Panc1 (cell line): ENCODE measurements at regions of chr5 and their contacts with region 1.

Region 1: GRCh38 chr5:131165119-131165727 is at the start of gene HINT1:
- DNase-seq: peak; percentile 69
- ATAC-seq: peak; percentile 96
- H3K4me3 ChIP-seq: peak within 1 kb of the TSS; percentile 83 to 92
- H3K27ac ChIP-seq: peak within 1 kb of the TSS; percentile 97
- H3K4me1 ChIP-seq: peaks cover 22% of the 10 kb centered on the region
- H3K27me3 ChIP-seq: no peaks in the 10 kb centered on the region
- CTCF ChIP-seq: peak; percentile 53
- total RNA-seq, gene HINT1: 233 TPM

Region 2: DNA sequence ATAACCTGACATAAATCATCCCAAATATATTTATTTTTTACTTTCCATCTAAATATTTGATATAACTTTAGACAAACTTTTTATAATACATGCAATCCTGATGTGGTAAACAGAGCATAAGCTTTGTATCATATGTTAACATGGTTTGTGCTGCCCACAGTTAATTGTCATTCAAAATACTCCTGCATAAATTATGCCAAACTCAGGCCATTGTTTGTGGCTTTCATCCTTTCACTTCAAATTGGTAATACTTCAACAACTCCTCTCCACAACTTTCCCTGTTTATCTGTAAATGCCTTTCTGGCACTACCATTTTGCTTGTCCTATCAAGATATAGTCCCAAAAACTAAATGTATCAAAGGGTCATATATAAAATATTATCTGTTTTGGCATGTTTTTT is 586.9 kb before region 1 on chr5:
- CTCF ChIA-PET with region 1: no interaction called
- POLR2A ChIA-PET with region 1: interaction called, 10 read pairs
- in situ Hi-C with region 1: no loop called
- intact Hi-C with region 1: no loop called
- DNase-seq: no peak
- ATAC-seq: no peak
- H3K4me3 ChIP-seq: no peak overlapping the region
- H3K27ac ChIP-seq: no peak overlapping the region
- H3K4me1 ChIP-seq: no peaks in the 10 kb centered on the region
- H3K27me3 ChIP-seq: no peaks in the 10 kb centered on the region
- CTCF ChIP-seq: no peak

Region 3: GRCh38 chr5:131218392-131218791 is 53.2 kb after region 1 on chr5:
- CTCF ChIA-PET with region 1: no interaction called
- POLR2A ChIA-PET with region 1: no interaction called
- in situ Hi-C with region 1: no loop called
- intact Hi-C with region 1: no loop called
- DNase-seq: no peak
- ATAC-seq: no peak
- H3K4me3 ChIP-seq: no peak overlapping the region
- H3K27ac ChIP-seq: no peak overlapping the region
- H3K4me1 ChIP-seq: no peaks in the 10 kb centered on the region
- H3K27me3 ChIP-seq: no peaks in the 10 kb centered on the region
- CTCF ChIP-seq: no peak

Region 4: DNA sequence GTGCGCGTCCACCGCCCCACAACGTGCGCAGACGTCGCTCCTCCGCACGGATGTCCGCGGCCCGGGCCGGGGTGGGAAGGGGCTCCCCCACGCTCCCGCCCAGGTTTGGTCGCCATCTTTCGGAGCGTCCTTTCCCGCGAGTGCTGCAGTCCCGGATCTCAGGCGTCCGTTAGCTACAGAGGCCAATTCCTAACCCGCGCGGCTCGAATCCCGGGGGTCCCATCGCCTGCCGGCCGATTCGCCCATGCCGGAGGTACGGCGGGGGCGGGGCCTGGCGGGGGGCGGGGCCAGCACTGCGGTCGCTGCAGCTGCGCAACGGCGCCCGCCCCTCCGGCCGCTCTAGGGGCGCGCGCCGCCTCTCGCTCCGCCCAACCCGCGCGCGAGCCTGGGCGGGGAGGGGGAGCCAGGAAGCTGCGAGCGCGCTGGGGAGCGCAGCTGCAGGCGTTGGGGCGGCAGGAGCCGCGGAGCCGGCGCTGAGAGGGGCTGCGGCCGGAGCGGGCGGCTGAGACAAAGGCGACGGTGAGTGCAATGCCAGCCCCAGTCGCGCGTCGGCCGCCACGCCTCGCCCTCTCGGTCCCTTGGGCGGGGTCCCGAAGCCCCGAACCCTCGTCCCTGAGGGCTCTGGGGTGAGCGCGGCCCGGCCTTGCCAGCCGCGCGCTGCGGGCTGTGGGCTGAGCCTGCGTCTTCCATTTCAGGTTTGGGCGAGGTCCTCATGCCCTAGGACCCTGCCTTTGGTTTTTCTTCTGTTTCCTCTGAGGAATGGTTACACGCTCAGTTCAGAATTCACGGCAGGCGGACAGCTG is 98.6 kb after region 1 on chr5 and contains the start of gene CDC42SE2:
- CTCF ChIA-PET with region 1: no interaction called
- POLR2A ChIA-PET with region 1: no interaction called
- in situ Hi-C with region 1: no loop called
- intact Hi-C with region 1: loop called (anchors 10 kb)
- DNase-seq: no peak
- ATAC-seq: peak; percentile 98
- H3K4me3 ChIP-seq: peak within 1 kb of the TSS; percentile 80 to 90
- H3K27ac ChIP-seq: peak within 1 kb of the TSS; percentile 95
- H3K4me1 ChIP-seq: peaks cover 3% of the 10 kb centered on the region; the same call in 1 of the 2 replicates
- H3K27me3 ChIP-seq: no peaks in the 10 kb centered on the region
- CTCF ChIP-seq: no peak
- total RNA-seq, gene CDC42SE2: 46.1 TPM

Region 5: DNA sequence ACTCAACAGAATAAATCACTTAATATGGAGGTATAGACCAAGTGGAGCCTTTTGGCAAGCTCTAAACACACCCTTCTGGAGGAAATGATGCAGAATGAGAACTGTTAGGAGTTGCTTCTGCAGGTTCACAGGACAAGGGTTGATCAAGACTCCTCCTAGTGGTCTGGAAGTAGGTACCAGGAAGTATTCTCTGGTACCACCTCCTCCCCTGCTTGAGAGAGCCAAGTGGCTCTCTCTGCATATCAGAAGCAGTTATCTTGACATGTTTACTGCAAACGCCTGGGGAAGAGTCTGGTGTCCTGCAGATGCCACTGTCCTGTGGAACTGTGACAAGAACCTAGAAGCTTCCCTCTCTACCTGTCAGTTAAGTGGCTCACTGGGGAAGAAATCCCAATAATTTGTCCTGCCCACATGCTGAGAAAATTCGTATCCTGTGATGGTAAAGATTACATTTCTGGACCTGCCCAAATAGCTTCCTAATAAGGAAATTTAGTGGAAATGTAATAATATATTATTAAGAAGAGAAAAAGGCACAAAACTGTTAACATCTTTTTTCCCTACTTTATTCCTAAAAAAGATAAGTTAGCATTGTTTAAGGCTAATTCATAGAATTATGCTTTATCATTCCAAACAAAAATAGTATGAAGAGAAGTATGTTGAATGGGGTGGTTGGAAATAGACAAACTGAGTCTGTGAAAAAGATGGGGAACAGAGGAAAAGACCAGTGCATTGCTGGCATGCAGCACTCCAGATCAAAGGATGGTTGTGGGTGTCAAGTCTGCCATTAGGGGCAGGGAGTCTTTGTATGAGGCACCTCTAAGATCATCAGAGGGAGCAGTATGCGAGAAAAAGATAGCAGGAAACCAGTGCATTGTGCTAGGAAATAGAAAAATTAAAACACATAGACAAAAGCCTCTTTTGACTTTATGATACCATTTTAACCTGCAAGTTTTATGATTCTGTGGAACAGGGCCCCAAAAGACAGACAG is 217.5 kb after region 1 on chr5:
- CTCF ChIA-PET with region 1: interaction called, 3 read pairs
- POLR2A ChIA-PET with region 1: no interaction called
- in situ Hi-C with region 1: no loop called
- intact Hi-C with region 1: loop called (anchors 5 kb)
- DNase-seq: peak; percentile 58
- ATAC-seq: peak; percentile 82
- H3K4me3 ChIP-seq: no peak overlapping the region
- H3K27ac ChIP-seq: peak overlapping the region; percentile 24
- H3K4me1 ChIP-seq: peaks cover 70% of the 10 kb centered on the region
- H3K27me3 ChIP-seq: no peaks in the 10 kb centered on the region
- CTCF ChIP-seq: peak; percentile 81